Gastrocnemius medialis (tissue), 4 donors: ENCODE measurements at regions of chr12 and their contacts with region 1.

Region 1: DNA sequence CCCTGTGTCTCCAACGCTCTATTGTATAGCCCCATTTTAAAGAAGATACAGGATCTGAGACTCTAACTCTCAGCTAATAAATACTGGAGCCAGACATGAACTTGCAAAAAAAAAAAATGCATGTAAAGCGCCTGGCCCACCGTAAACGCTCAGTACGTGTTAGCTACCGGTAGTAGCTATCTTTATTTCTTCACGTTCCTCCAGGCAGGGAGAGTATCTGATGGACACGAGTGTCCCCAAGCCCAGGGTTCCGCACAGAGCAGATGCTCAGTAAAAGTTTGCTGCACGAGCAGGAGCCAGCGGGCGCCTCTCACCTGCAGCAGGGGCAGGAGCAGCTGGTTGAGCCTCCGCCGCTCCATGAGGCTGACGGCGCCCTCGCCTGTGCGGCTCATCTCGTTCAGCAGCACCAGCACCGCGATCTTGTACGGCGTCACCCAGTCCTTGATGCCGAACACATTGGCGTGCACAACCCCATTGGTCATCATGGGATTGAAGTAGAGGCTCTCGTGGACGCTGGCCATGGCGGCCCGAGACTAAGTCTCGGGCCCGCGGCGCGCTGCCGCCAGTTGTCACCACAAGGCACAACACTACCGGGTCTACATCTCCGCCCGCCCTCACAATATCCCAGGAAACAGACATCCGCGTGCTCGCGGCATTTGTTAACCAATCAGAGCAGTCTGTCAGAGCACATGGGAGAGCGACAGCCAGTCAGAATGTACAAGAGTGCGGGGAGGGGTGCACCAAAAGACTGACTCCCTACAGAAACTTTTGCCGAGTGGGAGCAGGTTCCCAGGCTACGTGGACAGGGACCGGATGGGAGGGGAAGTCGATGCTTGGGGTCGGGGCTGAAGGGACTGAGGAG is at the start of gene ANAPC5:
- DNase-seq: peak; percentile 97 to 98
- ATAC-seq: peak; percentile 100
- H3K4me3 ChIP-seq: peak within 1 kb of the TSS; percentile 76 to 97 (median 86)
- H3K27ac ChIP-seq: peak within 1 kb of the TSS; percentile 81 to 89 (median 89)
- H3K4me1 ChIP-seq: peaks cover 11 to 18% of the 10 kb centered on the region in 2 donors
- H3K27me3 ChIP-seq: no peaks in the 10 kb centered on the region
- CTCF ChIP-seq: peak in 3 of 5 experiments; percentile 11 to 38 (median 28)
- POLR2A ChIP-seq: peak; percentile 71 to 87
- total RNA-seq, gene ANAPC5: 84.1 to 128 (median 91.8) TPM

Region 2: DNA sequence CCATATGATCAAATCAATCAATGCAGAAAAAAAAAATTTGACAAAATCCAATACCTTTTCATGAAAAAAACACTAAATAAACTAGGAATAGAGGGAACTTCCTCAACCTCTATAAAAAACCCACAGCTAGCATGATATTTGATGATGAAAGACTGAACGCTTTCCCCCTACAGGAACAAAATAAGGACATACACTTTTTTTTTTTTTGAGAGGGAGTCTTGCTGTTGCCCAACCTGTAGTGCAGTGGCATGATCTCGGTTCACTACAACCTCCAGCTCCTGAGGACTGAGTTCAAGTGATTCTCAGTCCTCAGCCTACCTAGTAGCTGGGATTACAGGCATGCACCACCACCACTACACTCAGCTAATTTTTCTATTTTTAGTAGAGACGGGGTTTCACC is 37.6 kb before region 1 on chr12:
- in situ Hi-C with region 1: no loop called
- intact Hi-C with region 1: no loop called
- DNase-seq: no peak
- ATAC-seq: no peak
- H3K4me3 ChIP-seq: no peak overlapping the region
- H3K27ac ChIP-seq: no peak overlapping the region
- H3K4me1 ChIP-seq: no peaks in the 10 kb centered on the region
- H3K27me3 ChIP-seq: no peaks in the 10 kb centered on the region
- CTCF ChIP-seq: no peak
- POLR2A ChIP-seq: no peak

Region 3: DNA sequence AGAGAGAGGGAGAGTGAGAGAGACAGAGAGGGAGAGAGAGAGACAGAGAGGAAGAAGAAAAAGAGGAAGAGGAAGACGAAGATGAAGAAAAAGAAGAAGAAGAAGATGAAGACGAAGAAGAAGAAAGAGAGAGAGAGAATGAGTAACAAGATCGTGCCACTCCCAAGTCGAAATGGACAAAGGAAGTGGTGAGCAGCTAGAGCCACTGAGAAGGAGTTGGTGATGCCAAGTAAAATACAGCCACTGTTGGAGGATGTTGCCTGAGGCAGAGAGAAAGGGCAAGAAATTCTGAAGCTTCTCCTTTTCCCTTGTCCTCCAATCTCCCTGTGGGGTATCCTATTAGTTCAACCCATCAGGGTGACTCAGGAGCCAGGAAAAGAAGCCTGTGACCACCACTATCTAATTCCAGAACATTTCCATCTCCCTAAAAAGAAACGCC is 12.7 kb after region 1 on chr12:
- in situ Hi-C with region 1: no loop called
- intact Hi-C with region 1: loop called (anchors 1 kb)
- DNase-seq: no peak
- ATAC-seq: no peak
- H3K4me3 ChIP-seq: no peak overlapping the region
- H3K27ac ChIP-seq: no peak overlapping the region
- H3K4me1 ChIP-seq: peaks cover 2 to 7% of the 10 kb centered on the region in 2 donors
- H3K27me3 ChIP-seq: no peaks in the 10 kb centered on the region
- CTCF ChIP-seq: no peak
- POLR2A ChIP-seq: no peak

Region 4: GRCh38 chr12:121443193-121443870 is 91.3 kb after region 1 on chr12:
- in situ Hi-C with region 1: no loop called
- intact Hi-C with region 1: loop called (anchors 5 kb)
- DNase-seq: peak; percentile 62 to 80
- ATAC-seq: peak; percentile 82 to 93
- H3K4me3 ChIP-seq: no peak overlapping the region
- H3K27ac ChIP-seq: peak overlapping the region in 3 of 4 donors; percentile 14 to 29 (median 23)
- H3K4me1 ChIP-seq: peaks cover 0 to 5% of the 10 kb centered on the region in 2 donors
- H3K27me3 ChIP-seq: no peaks in the 10 kb centered on the region
- CTCF ChIP-seq: peak; percentile 85 to 97 (median 94)
- POLR2A ChIP-seq: no peak

Region 5: GRCh38 chr12:121467115-121467793 is 115.2 kb after region 1 on chr12:
- in situ Hi-C with region 1: no loop called
- intact Hi-C with region 1: loop called (anchors 1 kb)
- DNase-seq: peak; percentile 78 to 87
- ATAC-seq: peak; percentile 86 to 88
- H3K4me3 ChIP-seq: peak overlapping the region; percentile 51 to 67 (median 64)
- H3K27ac ChIP-seq: peak overlapping the region; percentile 76 to 84 (median 82)
- H3K4me1 ChIP-seq: peaks cover 11 to 12% of the 10 kb centered on the region in 2 donors
- H3K27me3 ChIP-seq: no peaks in the 10 kb centered on the region
- CTCF ChIP-seq: no peak
- POLR2A ChIP-seq: peak; percentile 65 to 75

Region 6: GRCh38 chr12:121888478-121889266 is 536.6 kb after region 1 on chr12 and contains the start of gene PSMD9:
- in situ Hi-C with region 1: no loop called
- intact Hi-C with region 1: no loop called
- DNase-seq: peak; percentile 96
- ATAC-seq: peak; percentile 94 to 97
- H3K4me3 ChIP-seq: peak within 1 kb of the TSS; percentile 84 to 99 (median 92)
- H3K27ac ChIP-seq: peak within 1 kb of the TSS; percentile 94 to 99 (median 96)
- H3K4me1 ChIP-seq: peaks cover 19 to 24% of the 10 kb centered on the region in 2 donors
- H3K27me3 ChIP-seq: no peaks in the 10 kb centered on the region
- CTCF ChIP-seq: peak; percentile 61 to 77 (median 70)
- POLR2A ChIP-seq: peak; percentile 67 to 75
- total RNA-seq, gene PSMD9: 16.5 to 84.9 (median 47.0) TPM